ENCODE measurements at regions of chr1 and their contacts with region 1.

Region 1: GRCh38 chr1:203625628-203626019 is 1.0 kb upstream of the ATP2B4 start:
- DNase-seq: peak in 1 of 2 donors; percentile 78
- H3K4me3 ChIP-seq: no peak overlapping the region
- CTCF ChIP-seq: no peak
- POLR2A ChIP-seq: no peak

Region 2: GRCh38 chr1:203512830-203513611 is 112.6 kb before region 1 on chr1:
- intact Hi-C with region 1: loop called (anchors 10 kb)
- DNase-seq: peak; percentile 84 to 93
- H3K4me3 ChIP-seq: no peak overlapping the region
- CTCF ChIP-seq: no peak
- POLR2A ChIP-seq: no peak

Region 3: DNA sequence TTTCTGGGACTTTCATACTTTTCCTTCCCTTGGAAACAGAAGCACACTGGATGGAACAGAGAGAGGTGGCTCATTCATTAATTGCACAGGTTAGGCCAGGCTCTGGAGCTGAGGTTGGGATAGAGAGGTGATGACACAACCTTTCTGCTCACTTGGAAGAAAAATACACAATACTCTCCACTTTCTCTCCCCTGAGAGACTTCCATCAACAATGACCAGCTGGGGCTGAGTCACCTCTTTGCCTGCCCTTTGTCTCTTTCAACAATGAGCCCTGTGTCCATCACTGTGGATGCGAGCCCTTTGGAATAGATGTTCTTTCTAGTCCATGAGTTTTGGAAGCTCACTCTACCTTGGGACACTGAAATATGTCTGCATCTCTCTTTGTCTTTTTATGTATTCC is 44.1 kb after region 1 on chr1:
- intact Hi-C with region 1: loop called (anchors 5 kb)
- DNase-seq: no peak
- H3K4me3 ChIP-seq: no peak overlapping the region
- CTCF ChIP-seq: no peak
- POLR2A ChIP-seq: no peak

Region 4: DNA sequence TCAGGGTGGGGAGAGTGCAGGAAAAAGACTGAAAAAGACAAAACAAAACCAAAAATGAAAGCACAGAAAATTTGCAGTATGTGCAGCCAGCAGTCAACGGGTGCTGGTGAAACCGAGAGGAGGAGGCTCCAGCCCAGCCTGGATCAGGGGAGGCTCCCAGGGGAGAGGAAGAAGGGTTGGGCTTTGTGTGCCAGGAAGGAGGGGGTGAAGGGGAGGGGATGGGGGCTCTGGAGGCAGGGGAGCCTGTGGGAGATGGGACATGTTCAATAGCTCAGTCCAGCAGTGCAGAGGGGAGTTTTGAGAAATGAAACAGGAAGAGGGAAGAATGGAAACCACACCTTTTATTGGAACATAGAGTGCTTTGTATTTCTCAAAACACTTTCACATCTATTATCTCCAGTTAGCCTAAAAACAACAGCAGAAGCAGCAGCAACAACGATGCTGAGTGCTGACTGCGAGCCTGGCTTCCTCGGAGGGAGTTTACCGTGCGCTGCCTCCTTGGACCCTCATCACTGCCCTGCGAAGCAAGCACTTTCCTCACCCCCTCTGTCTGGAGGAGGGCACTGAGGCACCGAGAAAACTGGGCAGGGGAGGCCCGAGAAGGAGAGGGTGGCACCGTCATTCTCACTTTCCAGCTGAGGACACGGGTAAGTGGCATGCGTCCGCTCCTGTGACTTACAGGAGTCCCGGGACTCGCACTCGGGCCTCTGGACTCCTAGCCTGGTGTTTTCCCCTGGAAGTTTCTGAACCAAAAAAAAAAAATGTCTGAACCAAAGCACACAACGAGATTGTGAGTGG is 953.4 kb after region 1 on chr1:
- intact Hi-C with region 1: loop called (anchors 10 kb)
- DNase-seq: no peak
- H3K4me3 ChIP-seq: no peak overlapping the region
- CTCF ChIP-seq: no peak
- POLR2A ChIP-seq: no peak

Measured in lower leg skin (tissue), 4 donors.